Activated CD4-positive, alpha-beta T cell treated with anti-CD3 and anti-CD28 coated beads, Interleukin-2, amount 10 ng/mL, durations not matched to agents 24 days and 14 days (primary cell): ENCODE measurements at regions of chr6 and their contacts with region 1.

Region 1: DNA sequence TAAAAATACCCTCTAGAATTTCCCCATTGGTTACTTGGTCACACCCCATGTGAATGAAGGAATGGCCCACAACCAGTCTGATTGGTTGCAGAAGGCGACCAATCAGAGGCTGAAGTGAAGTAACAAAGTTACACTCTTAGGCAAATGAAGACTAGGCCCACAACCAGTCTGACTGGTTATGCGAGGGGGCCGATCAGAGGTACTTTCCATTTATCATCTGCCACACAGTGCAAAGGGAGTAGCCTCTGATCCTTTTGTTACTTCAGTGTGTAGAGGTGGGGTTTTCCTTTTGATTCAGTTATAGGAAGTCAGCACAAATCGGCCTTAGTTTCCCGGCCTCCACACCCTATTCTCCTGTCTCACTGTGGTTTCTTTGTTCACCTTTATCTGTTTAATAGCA is 61.2 kb upstream of the SGK1 start:
- DNase-seq: peak; percentile 83
- H3K4me3 Mint-ChIP-seq: peak overlapping the region; percentile 67
- H3K27ac Mint-ChIP-seq: peak overlapping the region; percentile 89
- H3K4me1 Mint-ChIP-seq: peaks cover 36% of the 10 kb centered on the region
- H3K27me3 Mint-ChIP-seq: no peaks in the 10 kb centered on the region

Region 2: DNA sequence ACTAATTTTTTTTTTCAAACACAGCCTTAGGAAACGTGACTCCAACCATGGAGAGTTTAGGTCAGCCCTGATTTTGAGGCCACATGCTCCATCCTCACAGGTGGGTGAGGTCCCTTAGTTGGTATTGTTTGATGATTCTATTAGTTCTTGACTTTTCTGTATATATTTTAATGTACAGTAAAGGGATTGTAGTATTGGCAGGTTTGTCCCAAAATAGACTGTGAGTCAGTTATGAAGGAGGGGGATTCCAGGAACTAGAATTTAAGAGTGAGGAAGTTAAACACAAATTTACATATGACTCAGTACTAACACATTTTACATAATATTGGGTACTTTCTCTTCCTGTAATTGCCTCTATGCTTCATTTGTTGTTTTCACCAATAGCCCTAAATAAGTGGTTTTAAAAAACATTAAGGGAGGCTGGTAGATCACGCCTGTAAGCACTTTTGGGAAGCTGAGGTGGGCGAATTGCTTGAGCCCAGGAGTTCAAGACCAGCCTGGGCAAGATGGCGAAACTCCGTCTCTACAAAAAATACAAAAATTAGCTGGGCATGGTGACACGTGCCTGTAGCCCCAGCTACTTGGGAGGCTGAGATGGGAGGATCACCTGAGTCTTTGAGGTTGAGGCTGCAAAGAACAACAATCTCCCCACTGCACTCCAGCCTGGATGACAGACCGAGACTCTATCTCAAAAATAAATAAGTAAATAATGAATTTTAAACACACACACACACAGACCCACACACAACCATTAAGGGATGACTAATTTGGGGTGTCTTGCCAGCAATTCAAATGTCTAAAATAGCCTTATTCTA is 142.9 kb before region 1 on chr6:
- intact Hi-C with region 1: loop called (anchors 1 kb)
- DNase-seq: peak; percentile 69
- H3K4me3 Mint-ChIP-seq: peak overlapping the region; percentile 51
- H3K27ac Mint-ChIP-seq: peak overlapping the region; percentile 88
- H3K4me1 Mint-ChIP-seq: peaks cover 40% of the 10 kb centered on the region
- H3K27me3 Mint-ChIP-seq: no peaks in the 10 kb centered on the region